ENCODE measurements at regions of chr7 and their contacts with region 1.

Region 1: DNA sequence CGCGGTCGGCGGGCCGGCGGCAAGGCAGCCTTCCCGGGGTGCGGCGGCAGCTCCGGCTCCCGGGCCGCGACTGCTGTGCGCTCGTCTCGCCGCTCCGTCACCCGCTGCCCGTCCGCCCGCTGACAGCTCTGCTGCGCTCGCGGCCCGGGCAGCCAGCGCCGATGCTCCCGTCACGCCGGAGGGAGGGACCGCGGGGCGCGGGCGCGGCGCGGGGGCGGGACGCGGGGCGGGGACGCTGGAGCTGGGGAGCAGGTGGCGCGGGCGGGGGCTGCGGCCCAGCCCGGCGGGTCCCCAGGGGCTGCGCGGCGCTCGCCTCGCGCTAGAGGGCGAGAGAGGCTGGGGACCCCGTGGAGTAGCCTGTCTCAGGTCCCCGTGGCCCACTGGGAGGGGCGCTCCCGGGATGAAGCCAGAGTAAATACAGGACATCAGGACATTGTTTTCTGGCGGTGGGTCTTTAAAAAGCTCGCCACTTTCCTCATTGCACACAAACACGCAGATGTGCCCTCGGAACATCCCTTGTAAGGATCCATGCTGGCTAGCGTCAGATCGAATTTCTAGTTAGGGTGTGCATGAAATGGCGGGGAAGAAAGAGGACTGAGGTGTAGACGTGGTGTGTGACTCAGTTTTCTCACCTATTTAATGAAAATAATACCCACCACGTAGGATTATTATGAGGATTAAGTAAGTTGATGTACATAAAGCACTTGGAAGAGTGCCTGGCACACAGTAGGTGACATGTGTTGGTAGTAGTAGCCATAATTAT is at the start of gene ELAPOR2:
- DNase-seq: peak; percentile 88
- ATAC-seq: peak; percentile 95
- H3K4me3 Mint-ChIP-seq: peak within 1 kb of the TSS; percentile 73
- H3K27ac Mint-ChIP-seq: peak within 1 kb of the TSS; percentile 63
- H3K4me1 Mint-ChIP-seq: peaks cover 13% of the 10 kb centered on the region
- H3K27me3 Mint-ChIP-seq: peaks cover 17% of the 10 kb centered on the region
- total RNA-seq, gene ELAPOR2: 3.9 to 4.4 TPM

Region 2: GRCh38 chr7:86926732-86927131 is 133.0 kb before region 1 on chr7:
- CTCF ChIA-PET with region 1: interaction called, 5 read pairs
- POLR2A ChIA-PET with region 1: no interaction called
- intact Hi-C with region 1: loop called in 1 of 2 experiments (anchors 2 kb)
- DNase-seq: peak; percentile 43
- ATAC-seq: peak; percentile 19
- H3K4me3 Mint-ChIP-seq: no peak overlapping the region
- H3K27ac Mint-ChIP-seq: no peak overlapping the region
- H3K4me1 Mint-ChIP-seq: peaks cover 8% of the 10 kb centered on the region
- H3K27me3 Mint-ChIP-seq: peaks cover 7% of the 10 kb centered on the region

Region 3: DNA sequence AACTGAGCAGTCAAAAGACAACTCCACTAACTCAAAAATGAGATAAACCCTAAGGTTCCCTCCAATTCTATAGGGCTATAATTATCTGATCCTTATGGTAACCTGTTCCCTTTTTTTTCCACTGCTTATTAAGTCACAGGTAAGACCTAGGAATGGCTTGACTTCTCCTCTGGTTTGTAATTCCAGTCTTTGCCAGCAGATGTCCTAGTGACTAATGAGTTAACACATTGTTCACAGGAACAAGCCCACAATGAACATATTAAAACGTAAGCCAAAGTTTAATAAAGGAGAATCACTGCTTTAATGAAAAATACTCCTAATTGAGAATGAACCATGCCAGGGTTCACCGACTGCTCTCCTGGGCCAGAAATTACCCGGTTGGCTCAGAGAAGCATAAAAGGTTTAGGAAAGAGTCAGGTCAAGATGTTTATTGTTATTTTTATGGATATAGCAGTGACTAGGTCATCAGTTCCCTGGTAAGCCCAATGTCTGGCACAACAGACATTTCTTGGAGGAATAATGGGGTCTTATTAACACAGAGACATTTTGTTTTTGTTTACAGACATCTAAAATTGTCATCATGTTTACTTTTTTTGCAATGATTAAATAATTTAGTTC is 120.4 kb before region 1 on chr7:
- CTCF ChIA-PET with region 1: no interaction called
- POLR2A ChIA-PET with region 1: no interaction called
- intact Hi-C with region 1: loop called in 1 of 2 experiments (anchors 1 kb)
- DNase-seq: peak; percentile 46
- ATAC-seq: peak; percentile 65
- H3K4me3 Mint-ChIP-seq: no peak overlapping the region
- H3K27ac Mint-ChIP-seq: no peak overlapping the region
- H3K4me1 Mint-ChIP-seq: no peaks in the 10 kb centered on the region
- H3K27me3 Mint-ChIP-seq: no peaks in the 10 kb centered on the region

Region 4: GRCh38 chr7:86978808-86979506 is 80.7 kb before region 1 on chr7:
- CTCF ChIA-PET with region 1: no interaction called
- POLR2A ChIA-PET with region 1: no interaction called
- intact Hi-C with region 1: loop called in 1 of 2 experiments (anchors 5 kb)
- DNase-seq: no peak
- ATAC-seq: peak; percentile 92
- H3K4me3 Mint-ChIP-seq: no peak overlapping the region
- H3K27ac Mint-ChIP-seq: peak overlapping the region; percentile 40
- H3K4me1 Mint-ChIP-seq: peaks cover 42% of the 10 kb centered on the region
- H3K27me3 Mint-ChIP-seq: no peaks in the 10 kb centered on the region

Region 5: GRCh38 chr7:87219545-87220025 is 159.9 kb after region 1 on chr7 and contains the start of gene TMEM243:
- CTCF ChIA-PET with region 1: no interaction called
- POLR2A ChIA-PET with region 1: no interaction called
- intact Hi-C with region 1: loop called (anchors 1 to 5 kb)
- DNase-seq: peak; percentile 91
- ATAC-seq: peak; percentile 47
- H3K4me3 Mint-ChIP-seq: peak within 1 kb of the TSS; percentile 97
- H3K27ac Mint-ChIP-seq: peak within 1 kb of the TSS; percentile 98
- H3K4me1 Mint-ChIP-seq: peaks cover 33% of the 10 kb centered on the region
- H3K27me3 Mint-ChIP-seq: peaks cover 3% of the 10 kb centered on the region
- total RNA-seq, gene TMEM243: 44.1 to 46.9 TPM

Region 6: DNA sequence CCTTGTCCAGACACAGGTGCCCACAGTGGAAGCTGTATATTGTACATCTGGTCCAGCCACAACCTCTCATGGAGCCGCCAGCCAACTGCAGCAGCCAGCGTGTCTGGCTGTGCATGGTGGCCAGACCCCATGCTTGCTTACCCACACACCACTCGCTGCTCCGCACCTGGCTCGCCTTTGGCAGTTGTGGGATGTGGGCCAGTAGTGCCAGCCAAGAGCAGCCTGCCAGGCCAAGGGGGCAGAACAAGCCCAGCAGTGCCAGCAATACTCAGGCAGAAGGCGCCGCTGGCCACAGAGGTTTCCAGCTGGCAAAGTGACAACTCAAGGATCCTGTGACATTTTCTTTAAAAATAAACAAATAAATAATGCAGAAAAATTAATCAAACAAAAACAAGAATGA is 171.6 kb after region 1 on chr7:
- CTCF ChIA-PET with region 1: interaction called, 6 read pairs
- POLR2A ChIA-PET with region 1: no interaction called
- intact Hi-C with region 1: loop called in 1 of 2 experiments (anchors 2 kb)
- DNase-seq: no peak
- ATAC-seq: no peak
- H3K4me3 Mint-ChIP-seq: no peak overlapping the region
- H3K27ac Mint-ChIP-seq: no peak overlapping the region
- H3K4me1 Mint-ChIP-seq: peaks cover 9% of the 10 kb centered on the region
- H3K27me3 Mint-ChIP-seq: peaks cover 4% of the 10 kb centered on the region

Region 7: GRCh38 chr7:87345166-87345927 is 285.6 kb after region 1 on chr7 and contains the start of gene CROT:
- CTCF ChIA-PET with region 1: no interaction called
- POLR2A ChIA-PET with region 1: interaction called, 3 read pairs
- intact Hi-C with region 1: loop called in 1 of 2 experiments (anchors 5 kb)
- DNase-seq: peak; percentile 97
- ATAC-seq: peak; percentile 98
- H3K4me3 Mint-ChIP-seq: peak within 1 kb of the TSS; percentile 94
- H3K27ac Mint-ChIP-seq: peak within 1 kb of the TSS; percentile 95
- H3K4me1 Mint-ChIP-seq: peaks cover 45% of the 10 kb centered on the region
- H3K27me3 Mint-ChIP-seq: no peaks in the 10 kb centered on the region
- total RNA-seq, gene CROT: 4.6 to 7.0 TPM